Calu3 (cell line): ENCODE measurements at regions of chr6 and their contacts with region 1.

Region 1: GRCh38 chr6:37202788-37203491 is 33.0 kb downstream of the PIM1 start:
- DNase-seq: peak; percentile 50
- H3K4me3 Mint-ChIP-seq: peak overlapping the region; percentile 12
- H3K27ac Mint-ChIP-seq: peak overlapping the region; percentile 19
- H3K4me1 Mint-ChIP-seq: peaks cover 33% of the 10 kb centered on the region
- H3K27me3 Mint-ChIP-seq: peaks cover 15% of the 10 kb centered on the region
- CTCF ChIP-seq: no peak

Region 2: GRCh38 chr6:37187321-37188022 is 15.5 kb before region 1 on chr6:
- CTCF ChIA-PET with region 1: interaction called, 14 read pairs
- intact Hi-C with region 1: no loop called
- DNase-seq: no peak
- H3K4me3 Mint-ChIP-seq: no peak overlapping the region
- H3K27ac Mint-ChIP-seq: no peak overlapping the region
- H3K4me1 Mint-ChIP-seq: no peaks in the 10 kb centered on the region
- H3K27me3 Mint-ChIP-seq: peaks cover 19% of the 10 kb centered on the region
- CTCF ChIP-seq: no peak